WTC11 (cell line): ENCODE measurements at regions of chr1 and their contacts with region 1.

Region 1: DNA sequence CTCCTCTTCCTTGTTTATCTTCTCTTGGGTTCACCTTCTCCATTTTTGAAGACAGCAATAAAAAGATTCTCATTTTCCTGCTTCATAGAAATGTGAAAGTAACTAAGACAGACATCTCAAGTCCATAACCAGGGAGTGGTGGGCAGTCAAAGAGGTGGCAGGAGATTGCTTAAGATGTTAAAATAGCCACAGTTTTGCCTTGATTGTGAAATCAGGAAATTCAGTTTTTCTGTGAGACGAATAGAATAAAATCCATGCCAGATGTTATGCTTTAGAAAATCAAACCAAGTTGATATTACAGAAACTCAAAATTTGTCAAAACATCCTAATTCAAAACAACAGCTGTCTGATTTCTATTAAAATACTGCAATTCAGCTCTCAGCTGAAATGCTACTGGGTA is 57.2 kb downstream of the TNN start:
- DNase-seq: no peak
- ATAC-seq: no peak
- H3K4me3 Mint-ChIP-seq: no peak overlapping the region
- H3K27ac Mint-ChIP-seq: 0 out of 2 replicates have a peak overlapping the region, but pooled peaks have one; percentile 51
- H3K4me1 Mint-ChIP-seq: peaks cover 23% of the 10 kb centered on the region
- H3K27me3 Mint-ChIP-seq: no peaks in the 10 kb centered on the region
- CTCF ChIP-seq: no peak

Region 2: GRCh38 chr1:175023043-175023921 is 101.6 kb before region 1 on chr1 and contains the start of gene MRPS14:
- CTCF ChIA-PET with region 1: interaction called, 24 read pairs
- POLR2A ChIA-PET with region 1: interaction called, 8 read pairs
- DNase-seq: peak; percentile 99
- ATAC-seq: peak; percentile 97
- H3K4me3 Mint-ChIP-seq: peak within 1 kb of the TSS; percentile 98
- H3K27ac Mint-ChIP-seq: peak within 1 kb of the TSS; percentile 97
- H3K4me1 Mint-ChIP-seq: peaks cover 4% of the 10 kb centered on the region
- H3K27me3 Mint-ChIP-seq: no peaks in the 10 kb centered on the region
- CTCF ChIP-seq: no peak
- total RNA-seq, gene MRPS14: 30.4 to 33.1 TPM (median 32.1 TPM) in 3 replicates

Region 3: GRCh38 chr1:175043824-175044223 is 81.0 kb before region 1 on chr1:
- CTCF ChIA-PET with region 1: interaction called, 19 read pairs
- POLR2A ChIA-PET with region 1: no interaction called
- DNase-seq: no peak
- ATAC-seq: peak; percentile 66
- H3K4me3 Mint-ChIP-seq: no peak overlapping the region
- H3K27ac Mint-ChIP-seq: no peak overlapping the region
- H3K4me1 Mint-ChIP-seq: peaks cover 9% of the 10 kb centered on the region
- H3K27me3 Mint-ChIP-seq: no peaks in the 10 kb centered on the region
- CTCF ChIP-seq: no peak

Region 4: GRCh38 chr1:175075572-175076568 is 49.0 kb before region 1 on chr1:
- CTCF ChIA-PET with region 1: interaction called, 29 read pairs
- POLR2A ChIA-PET with region 1: no interaction called
- DNase-seq: no peak
- ATAC-seq: peak; percentile 5; the same call in 1 of the 2 replicates
- H3K4me3 Mint-ChIP-seq: no peak overlapping the region
- H3K27ac Mint-ChIP-seq: no peak overlapping the region
- H3K4me1 Mint-ChIP-seq: peaks cover 35% of the 10 kb centered on the region
- H3K27me3 Mint-ChIP-seq: peaks cover 13% of the 10 kb centered on the region
- CTCF ChIP-seq: no peak

Region 5: DNA sequence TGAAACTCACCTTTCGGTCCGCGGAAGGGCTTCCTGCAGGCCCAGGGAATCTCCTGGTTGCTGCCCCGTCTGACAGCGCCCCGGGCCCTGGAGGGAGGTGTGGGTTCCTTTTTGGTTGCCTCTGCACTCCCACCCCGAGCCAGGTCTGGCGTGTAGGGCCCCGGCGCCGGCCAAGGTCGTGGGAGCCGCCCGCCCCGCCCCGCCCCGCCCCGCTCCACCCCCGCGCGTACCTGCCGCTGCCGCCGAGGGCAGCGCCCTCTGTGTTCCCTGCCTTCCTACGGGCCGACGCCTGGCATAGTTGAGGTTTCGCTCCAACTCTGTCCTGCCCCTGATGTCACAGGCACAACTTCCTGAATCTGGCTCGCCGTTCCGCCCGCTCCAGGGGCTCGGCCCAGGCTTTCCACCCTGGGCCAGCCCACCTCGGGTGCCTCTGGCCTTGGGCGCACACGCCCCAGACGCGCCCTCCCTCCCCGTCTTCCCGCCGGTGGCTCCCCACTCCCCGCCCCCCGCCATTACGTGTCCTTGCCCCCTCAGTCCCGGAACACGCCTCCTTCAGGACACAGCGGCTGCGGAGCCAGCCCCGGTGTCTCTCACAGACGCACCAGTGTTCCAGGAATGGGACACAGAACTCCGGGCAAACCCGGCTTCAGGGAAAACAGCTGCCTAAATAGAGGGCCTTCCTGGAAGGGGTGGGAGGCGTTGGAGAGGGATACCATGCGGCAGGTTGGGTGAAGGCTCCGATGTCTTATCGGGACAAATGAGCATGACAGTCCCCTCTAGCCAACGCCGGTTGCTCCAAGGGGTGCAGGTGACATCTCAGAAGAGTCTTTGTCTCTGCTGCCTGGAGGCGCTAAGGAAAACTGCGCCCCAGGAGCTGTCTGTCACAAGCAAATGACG is 68.0 kb after region 1 on chr1 and contains the start of gene KIAA0040:
- CTCF ChIA-PET with region 1: interaction called, 10 read pairs
- POLR2A ChIA-PET with region 1: no interaction called
- DNase-seq: peak; percentile 72
- ATAC-seq: peak; percentile 86
- H3K4me3 Mint-ChIP-seq: peak within 1 kb of the TSS; percentile 90
- H3K27ac Mint-ChIP-seq: peak within 1 kb of the TSS; percentile 27; the same call in 1 of the 2 replicates
- H3K4me1 Mint-ChIP-seq: peaks cover 16% of the 10 kb centered on the region
- H3K27me3 Mint-ChIP-seq: peaks cover 25% of the 10 kb centered on the region
- CTCF ChIP-seq: no peak
- total RNA-seq, gene KIAA0040: 8.8 to 15.0 TPM (median 11.9 TPM) in 3 replicates

Region 6: GRCh38 chr1:175267716-175268384 is 143.0 kb after region 1 on chr1:
- CTCF ChIA-PET with region 1: no interaction called
- POLR2A ChIA-PET with region 1: no interaction called
- DNase-seq: no peak
- ATAC-seq: peak; percentile 61; the same call in 1 of the 2 replicates
- H3K4me3 Mint-ChIP-seq: no peak overlapping the region
- H3K27ac Mint-ChIP-seq: no peak overlapping the region
- H3K4me1 Mint-ChIP-seq: no peaks in the 10 kb centered on the region
- H3K27me3 Mint-ChIP-seq: peaks cover 11% of the 10 kb centered on the region
- CTCF ChIP-seq: no peak